Endothelial cell of umbilical vein (primary cell): ENCODE measurements at regions of chr12 and their contacts with region 1.

Region 1: DNA sequence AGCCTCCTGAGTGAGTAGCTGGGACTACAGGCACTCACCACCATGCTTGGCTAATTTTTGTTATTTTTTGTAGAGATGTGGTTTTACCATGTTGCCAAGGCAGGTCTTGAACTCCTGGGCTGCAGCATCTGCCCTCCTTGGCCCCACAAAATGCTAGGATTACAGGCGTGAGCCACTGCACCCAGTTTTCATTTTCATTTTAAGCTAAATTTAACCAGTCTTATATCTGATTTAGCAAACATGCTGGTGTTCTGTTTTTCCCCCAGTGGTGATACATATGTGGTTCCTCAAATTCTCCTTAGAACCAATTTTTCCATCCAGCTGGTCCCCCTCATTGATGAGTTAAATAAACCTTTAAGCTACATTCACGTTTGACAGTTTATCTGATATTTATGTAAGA is 43.8 kb upstream of the BICD1 start:
- DNase-seq: no peak
- H3K4me3 ChIP-seq: no peak overlapping the region
- H3K27ac ChIP-seq: no peak overlapping the region
- H3K4me1 ChIP-seq: no peaks in the 10 kb centered on the region
- H3K27me3 ChIP-seq: peaks cover 0 to 2% of the 10 kb centered on the region in 2 experiments
- CTCF ChIP-seq: no peak
- POLR2A ChIP-seq: no peak

Region 2: GRCh38 chr12:31682136-31682962 is 380.5 kb before region 1 on chr12:
- CTCF ChIA-PET with region 1: interaction called, 13 read pairs
- POLR2A ChIA-PET with region 1: no interaction called
- dilution Hi-C with region 1: no loop called
- intact Hi-C with region 1: loop called (anchors 1 kb)
- DNase-seq: peak; percentile 87
- H3K4me3 ChIP-seq: no peak overlapping the region
- H3K27ac ChIP-seq: no peak overlapping the region
- H3K4me1 ChIP-seq: no peaks in the 10 kb centered on the region
- H3K27me3 ChIP-seq: no peaks in the 10 kb centered on the region
- CTCF ChIP-seq: peak; percentile 69 to 71
- POLR2A ChIP-seq: no peak

Region 3: GRCh38 chr12:32051559-32052414 is 11.1 kb before region 1 on chr12:
- CTCF ChIA-PET with region 1: interaction called, 17 read pairs
- POLR2A ChIA-PET with region 1: no interaction called
- dilution Hi-C with region 1: no loop called
- intact Hi-C with region 1: no loop called
- DNase-seq: peak; percentile 77
- H3K4me3 ChIP-seq: no peak overlapping the region
- H3K27ac ChIP-seq: no peak overlapping the region
- H3K4me1 ChIP-seq: peaks cover 2% of the 10 kb centered on the region
- H3K27me3 ChIP-seq: no peaks in the 10 kb centered on the region
- CTCF ChIP-seq: no peak
- POLR2A ChIP-seq: no peak

Region 4: GRCh38 chr12:32302218-32303173 is 239.6 kb after region 1 on chr12:
- CTCF ChIA-PET with region 1: interaction called, 25 read pairs
- POLR2A ChIA-PET with region 1: no interaction called
- dilution Hi-C with region 1: no loop called
- intact Hi-C with region 1: loop called (anchors 1 kb)
- DNase-seq: peak; percentile 56
- H3K4me3 ChIP-seq: no peak overlapping the region
- H3K27ac ChIP-seq: no peak overlapping the region
- H3K4me1 ChIP-seq: no peaks in the 10 kb centered on the region
- H3K27me3 ChIP-seq: no peaks in the 10 kb centered on the region
- CTCF ChIP-seq: peak; percentile 58 to 61
- POLR2A ChIP-seq: no peak